ENCODE measurements at regions of chr1 and their contacts with region 1.

Region 1: GRCh38 chr1:117051224-117052064 is 8.7 kb upstream of the TTF2 start:
- DNase-seq: no peak

Region 2: GRCh38 chr1:116737020-116737854 is 314.2 kb before region 1 on chr1:
- intact Hi-C with region 1: loop called (anchors 1 kb)
- DNase-seq: no peak

Region 3: GRCh38 chr1:116808200-116808847 is 243.1 kb before region 1 on chr1:
- intact Hi-C with region 1: no loop called
- DNase-seq: no peak

Region 4: GRCh38 chr1:116990612-116991151 is 60.8 kb before region 1 on chr1:
- intact Hi-C with region 1: loop called (anchors 5 kb)
- DNase-seq: peak; percentile 81

Region 5: GRCh38 chr1:117110774-117111173 is 59.3 kb after region 1 on chr1:
- intact Hi-C with region 1: no loop called
- DNase-seq: no peak

Measured in cardiac septum (tissue), 1 donor.